Activated naive CD4-positive, alpha-beta T cell treated with anti-CD3 and anti-CD28 coated beads, Interleukin-2, amount 10 ng/mL, durations not matched to agents 7 days and 5 days (primary cell): ENCODE measurements at regions of chr6 and their contacts with region 1.

Region 1: DNA sequence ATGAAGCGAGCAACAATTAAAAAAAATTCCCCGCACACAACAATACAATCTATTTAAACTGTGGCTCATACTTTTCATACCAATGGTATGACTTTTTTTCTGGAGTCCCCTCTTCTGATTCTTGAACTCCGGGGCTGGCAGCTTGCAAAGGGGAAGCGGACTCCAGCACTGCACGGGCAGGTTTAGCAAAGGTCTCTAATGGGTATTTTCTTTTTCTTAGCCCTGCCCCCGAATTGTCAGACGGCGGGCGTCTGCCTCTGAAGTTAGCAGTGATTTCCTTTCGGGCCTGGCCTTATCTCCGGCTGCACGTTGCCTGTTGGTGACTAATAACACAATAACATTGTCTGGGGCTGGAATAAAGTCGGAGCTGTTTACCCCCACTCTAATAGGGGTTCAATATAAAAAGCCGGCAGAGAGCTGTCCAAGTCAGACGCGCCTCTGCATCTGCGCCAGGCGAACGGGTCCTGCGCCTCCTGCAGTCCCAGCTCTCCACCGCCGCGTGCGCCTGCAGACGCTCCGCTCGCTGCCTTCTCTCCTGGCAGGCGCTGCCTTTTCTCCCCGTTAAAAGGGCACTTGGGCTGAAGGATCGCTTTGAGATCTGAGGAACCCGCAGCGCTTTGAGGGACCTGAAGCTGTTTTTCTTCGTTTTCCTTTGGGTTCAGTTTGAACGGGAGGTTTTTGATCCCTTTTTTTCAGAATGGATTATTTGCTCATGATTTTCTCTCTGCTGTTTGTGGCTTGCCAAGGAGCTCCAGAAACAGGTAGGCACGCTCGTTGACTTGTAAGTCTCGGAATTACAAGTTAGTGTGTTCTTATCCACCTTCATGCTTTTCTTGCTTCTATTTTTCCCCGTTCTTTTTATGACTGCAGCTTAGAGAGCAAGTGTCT is at the start of gene EDN1:
- DNase-seq: peak; percentile 60
- H3K4me3 Mint-ChIP-seq: peak within 1 kb of the TSS; percentile 79
- H3K27ac Mint-ChIP-seq: no peak within 1 kb of the TSS
- H3K4me1 Mint-ChIP-seq: peaks cover 17% of the 10 kb centered on the region
- H3K27me3 Mint-ChIP-seq: peaks cover 60% of the 10 kb centered on the region

Region 2: GRCh38 chr6:11585426-11586016 is 704.7 kb before region 1 on chr6:
- CTCF ChIA-PET with region 1: interaction called, 13 read pairs
- DNase-seq: no peak
- H3K4me3 Mint-ChIP-seq: no peak overlapping the region
- H3K27ac Mint-ChIP-seq: no peak overlapping the region
- H3K4me1 Mint-ChIP-seq: no peaks in the 10 kb centered on the region
- H3K27me3 Mint-ChIP-seq: peaks cover 7% of the 10 kb centered on the region

Region 3: DNA sequence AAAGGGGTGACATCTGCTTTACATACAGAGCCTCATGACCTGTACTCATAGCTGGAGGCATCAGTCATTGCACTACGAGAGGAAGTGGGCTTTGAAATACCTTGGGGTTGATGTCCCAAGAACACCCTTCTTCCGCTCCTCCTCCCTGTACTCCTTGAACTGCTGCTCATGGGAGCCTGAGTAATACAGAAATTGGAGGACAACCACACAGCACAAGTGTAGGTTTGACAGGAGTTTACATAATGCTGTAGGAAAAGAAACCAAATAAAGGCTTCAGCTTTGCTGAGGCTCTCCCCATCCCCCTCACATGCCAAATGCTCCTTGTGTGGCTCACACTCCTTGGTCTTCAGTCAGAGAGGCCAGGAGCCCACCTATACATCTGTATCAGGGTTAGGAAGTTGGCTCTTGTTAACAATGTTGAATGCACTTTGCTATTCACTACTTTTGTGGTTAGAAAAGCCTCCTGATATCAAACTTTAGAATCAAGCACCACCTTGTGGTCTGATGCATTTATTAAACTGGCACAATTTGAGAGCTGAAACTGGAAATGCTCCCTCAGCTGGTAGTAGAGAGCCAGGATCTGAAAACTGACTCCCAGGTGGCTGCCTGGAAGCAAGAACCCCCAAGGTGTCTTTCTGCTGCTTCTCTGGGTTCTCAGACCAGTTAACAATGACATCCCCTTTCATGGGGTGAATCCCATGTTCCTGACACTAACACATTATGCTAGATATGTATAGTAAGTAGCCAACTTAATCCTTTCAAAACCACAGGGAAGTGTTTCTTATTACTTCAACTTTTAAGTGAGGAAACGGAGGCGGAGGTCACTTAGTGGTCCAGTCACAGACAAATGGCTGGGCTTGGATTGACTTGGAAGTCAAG is 56.2 kb before region 1 on chr6:
- CTCF ChIA-PET with region 1: interaction called, 14 read pairs
- DNase-seq: peak; percentile 50
- H3K4me3 Mint-ChIP-seq: no peak overlapping the region
- H3K27ac Mint-ChIP-seq: no peak overlapping the region
- H3K4me1 Mint-ChIP-seq: peaks cover 27% of the 10 kb centered on the region
- H3K27me3 Mint-ChIP-seq: no peaks in the 10 kb centered on the region

Region 4: DNA sequence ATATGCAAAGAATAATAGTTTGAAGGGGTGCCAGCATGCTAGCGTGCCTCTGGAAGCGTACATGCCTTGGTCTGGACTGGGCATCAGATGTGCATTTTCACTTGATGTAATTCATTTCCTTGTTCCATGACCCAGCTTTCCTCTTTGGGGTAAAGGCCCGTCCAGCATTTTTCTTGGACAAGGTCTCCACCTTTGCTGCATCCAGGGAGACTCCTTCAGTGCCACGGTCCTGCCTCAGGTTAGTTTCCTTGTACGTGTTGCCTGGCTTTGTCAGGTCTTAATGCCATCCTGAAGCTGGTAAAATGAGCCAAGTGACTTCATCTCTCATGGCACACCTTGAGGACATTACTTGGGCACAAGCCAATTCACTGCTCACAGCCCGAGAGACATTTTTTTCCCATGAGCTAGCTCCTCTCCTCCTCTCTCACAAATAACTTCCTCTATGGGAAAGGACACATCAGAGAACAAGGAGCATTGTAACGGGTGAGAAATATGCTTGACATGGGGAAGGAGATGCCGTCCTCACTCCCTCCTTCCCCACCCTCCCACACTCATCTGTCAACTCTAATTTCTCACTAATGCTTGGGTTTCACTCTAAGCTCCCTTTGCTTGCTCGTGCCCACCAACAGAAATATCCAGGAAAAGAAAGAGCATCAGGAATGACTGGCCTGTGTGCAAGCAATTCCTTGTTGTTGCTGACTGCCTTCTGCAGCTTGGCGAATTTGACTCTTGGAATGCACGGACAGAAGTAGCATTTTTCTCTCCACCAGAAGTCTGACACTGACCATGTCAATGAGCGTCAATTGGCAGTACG is 24.0 kb after region 1 on chr6:
- CTCF ChIA-PET with region 1: no interaction called
- DNase-seq: no peak
- H3K4me3 Mint-ChIP-seq: no peak overlapping the region
- H3K27ac Mint-ChIP-seq: no peak overlapping the region
- H3K4me1 Mint-ChIP-seq: no peaks in the 10 kb centered on the region
- H3K27me3 Mint-ChIP-seq: peaks cover 4% of the 10 kb centered on the region

Region 5: GRCh38 chr6:12516070-12516469 is 225.9 kb after region 1 on chr6:
- CTCF ChIA-PET with region 1: no interaction called
- DNase-seq: no peak
- H3K4me3 Mint-ChIP-seq: no peak overlapping the region
- H3K27ac Mint-ChIP-seq: no peak overlapping the region
- H3K4me1 Mint-ChIP-seq: no peaks in the 10 kb centered on the region
- H3K27me3 Mint-ChIP-seq: no peaks in the 10 kb centered on the region

Region 6: DNA sequence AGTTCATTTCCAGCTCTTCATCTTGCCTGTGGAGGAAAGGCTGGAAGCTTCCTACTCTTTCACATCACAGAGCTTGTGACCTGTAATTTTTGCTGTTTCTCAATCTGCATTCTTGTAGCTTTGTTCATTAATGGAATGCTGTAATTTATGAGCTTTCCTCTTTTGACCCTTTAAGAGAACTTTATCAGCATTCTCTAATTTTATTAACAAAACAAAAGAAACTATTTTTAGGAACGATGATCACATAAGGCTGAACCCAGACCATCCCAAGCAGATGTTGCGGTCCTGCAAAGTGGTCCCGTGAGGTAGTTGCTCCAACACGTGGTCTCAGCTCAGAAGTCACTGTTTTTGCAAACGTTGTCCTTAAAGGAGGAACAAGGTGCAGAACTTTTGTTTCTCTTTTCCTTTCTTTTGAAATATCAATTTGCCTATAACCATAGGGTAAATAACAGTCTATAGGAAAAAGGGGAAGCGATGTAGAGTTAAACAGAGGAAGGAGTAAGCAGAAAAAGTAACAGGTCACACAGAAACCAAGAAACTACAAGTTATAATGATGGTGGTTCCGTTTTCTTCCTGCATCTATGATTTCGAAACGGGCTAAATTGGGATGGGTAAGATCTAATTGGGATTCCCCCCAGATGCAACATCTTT is 305.1 kb after region 1 on chr6:
- CTCF ChIA-PET with region 1: no interaction called
- DNase-seq: no peak
- H3K4me3 Mint-ChIP-seq: no peak overlapping the region
- H3K27ac Mint-ChIP-seq: no peak overlapping the region
- H3K4me1 Mint-ChIP-seq: no peaks in the 10 kb centered on the region
- H3K27me3 Mint-ChIP-seq: peaks cover 11% of the 10 kb centered on the region